Caco-2 (cell line): ENCODE measurements at regions of chr11 and their contacts with region 1.

Region 1: DNA sequence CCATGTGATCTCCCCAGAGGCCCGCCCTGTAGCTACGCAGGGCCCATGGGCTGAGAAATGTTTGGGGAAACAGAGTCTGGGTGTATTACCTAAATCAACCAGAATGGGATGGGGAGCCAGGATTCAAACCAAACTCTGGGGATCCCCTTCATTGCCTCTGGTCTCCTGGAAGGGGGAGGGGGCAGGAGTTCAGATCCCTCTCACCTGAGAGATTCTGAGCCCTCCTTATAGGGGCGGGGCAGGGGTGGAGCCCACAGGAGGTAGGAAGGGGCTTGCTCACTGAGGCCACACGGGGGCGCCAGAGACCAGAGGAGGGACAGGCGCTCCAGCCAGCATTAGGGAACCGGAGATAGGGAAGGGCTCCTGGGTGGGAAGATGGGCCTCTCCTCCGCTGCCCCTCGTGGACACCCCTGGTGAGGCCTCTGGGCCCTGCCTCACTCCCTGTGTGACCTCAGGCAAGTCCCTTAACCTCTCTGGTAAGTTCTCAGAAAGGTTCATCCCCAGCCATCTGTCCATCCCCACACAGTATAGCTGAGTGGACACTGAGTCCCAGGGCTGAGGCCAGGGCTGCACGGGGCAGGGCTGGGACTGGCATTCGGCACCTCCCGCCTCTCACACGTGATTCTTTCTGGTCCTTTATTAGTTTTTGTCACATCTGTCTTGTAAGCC is 2.7 kb upstream of the CDC42BPG start:
- DNase-seq: peak; percentile 96 to 98
- H3K4me3 ChIP-seq: no peak overlapping the region
- H3K4me3 Mint-ChIP-seq: no peak overlapping the region
- H3K27ac Mint-ChIP-seq: no peak overlapping the region
- H3K4me1 ChIP-seq: peaks cover 34% of the 10 kb centered on the region
- H3K4me1 Mint-ChIP-seq: peaks cover 31% of the 10 kb centered on the region
- H3K27me3 ChIP-seq: no peaks in the 10 kb centered on the region
- H3K27me3 Mint-ChIP-seq: no peaks in the 10 kb centered on the region
- CTCF ChIP-seq: peak; percentile 95 to 99

Region 2: DNA sequence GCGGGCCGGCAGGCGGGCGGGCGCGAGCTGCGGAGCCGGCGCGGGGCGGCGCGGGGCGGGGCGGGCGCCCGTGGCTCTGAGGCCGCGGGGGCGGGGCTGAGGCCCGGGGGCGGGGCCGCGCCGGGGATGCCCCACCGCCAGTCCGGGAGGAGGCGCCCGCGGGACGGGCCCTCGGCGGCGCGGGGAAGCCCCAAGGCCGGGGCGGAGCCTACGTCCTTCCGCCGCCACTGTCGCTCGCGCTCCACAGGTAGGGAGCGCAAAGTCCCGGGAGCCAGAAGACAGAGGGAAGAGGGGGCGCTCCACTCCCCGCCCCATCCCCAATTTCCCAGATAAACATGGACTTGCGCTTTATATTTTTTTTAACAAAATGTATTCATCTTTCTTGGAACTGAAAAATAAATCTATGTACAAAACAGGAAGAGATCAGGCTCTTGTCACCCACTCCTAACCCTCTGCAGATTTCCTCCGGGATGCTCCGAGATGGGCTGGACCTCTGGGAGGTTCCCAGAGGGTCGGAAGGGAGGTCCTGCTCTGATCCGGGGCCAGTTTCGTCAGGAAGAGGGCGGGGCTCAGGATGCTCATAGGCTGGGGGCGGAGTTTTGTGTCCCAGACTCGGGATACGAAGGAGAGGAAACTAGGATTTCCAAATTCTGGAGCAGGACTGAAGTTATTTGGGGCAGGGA is 43.8 kb before region 1 on chr11 and contains the start of gene MAP4K2:
- CTCF ChIA-PET with region 1: interaction called, 3 read pairs
- POLR2A ChIA-PET with region 1: interaction called, 3 read pairs
- intact Hi-C with region 1: loop called (anchors 5 kb)
- DNase-seq: peak; percentile 92 to 96
- H3K4me3 ChIP-seq: peak within 1 kb of the TSS; percentile 75
- H3K4me3 Mint-ChIP-seq: peak within 1 kb of the TSS; percentile 87
- H3K27ac Mint-ChIP-seq: peak within 1 kb of the TSS; percentile 76
- H3K4me1 ChIP-seq: peaks cover 20% of the 10 kb centered on the region
- H3K4me1 Mint-ChIP-seq: peaks cover 9% of the 10 kb centered on the region
- H3K27me3 ChIP-seq: no peaks in the 10 kb centered on the region
- H3K27me3 Mint-ChIP-seq: no peaks in the 10 kb centered on the region
- CTCF ChIP-seq: peak; percentile 17 to 42
- total RNA-seq, gene MAP4K2: 16.8 and 21.4 TPM in 2 replicates

Region 3: GRCh38 chr11:64878494-64879243 is 31.5 kb after region 1 on chr11 and contains the start of gene EHD1:
- CTCF ChIA-PET with region 1: interaction called, 16 read pairs
- POLR2A ChIA-PET with region 1: interaction called, 4 read pairs
- intact Hi-C with region 1: loop called (anchors 1 kb)
- DNase-seq: peak; percentile 99
- H3K4me3 ChIP-seq: peak within 1 kb of the TSS; percentile 93
- H3K4me3 Mint-ChIP-seq: peak within 1 kb of the TSS; percentile 85
- H3K27ac Mint-ChIP-seq: peak within 1 kb of the TSS; percentile 82
- H3K4me1 ChIP-seq: peaks cover 26% of the 10 kb centered on the region
- H3K4me1 Mint-ChIP-seq: peaks cover 7% of the 10 kb centered on the region
- H3K27me3 ChIP-seq: no peaks in the 10 kb centered on the region
- H3K27me3 Mint-ChIP-seq: no peaks in the 10 kb centered on the region
- CTCF ChIP-seq: peak in 1 of 2 experiments; percentile 75
- total RNA-seq, gene EHD1: 123 and 129 TPM in 2 replicates

Region 4: GRCh38 chr11:64894070-64894796 is 47.1 kb after region 1 on chr11:
- CTCF ChIA-PET with region 1: interaction called, 51 read pairs
- POLR2A ChIA-PET with region 1: no interaction called
- intact Hi-C with region 1: loop called (anchors 1 kb)
- DNase-seq: peak; percentile 90 to 94
- H3K4me3 ChIP-seq: peak overlapping the region; percentile 78
- H3K4me3 Mint-ChIP-seq: peak overlapping the region; percentile 80
- H3K27ac Mint-ChIP-seq: peak overlapping the region; percentile 93
- H3K4me1 ChIP-seq: peaks cover 47% of the 10 kb centered on the region
- H3K4me1 Mint-ChIP-seq: peaks cover 22% of the 10 kb centered on the region
- H3K27me3 ChIP-seq: no peaks in the 10 kb centered on the region
- H3K27me3 Mint-ChIP-seq: no peaks in the 10 kb centered on the region
- CTCF ChIP-seq: peak; percentile 94 to 97

Region 5: GRCh38 chr11:64947208-64947814 is 100.2 kb after region 1 on chr11:
- CTCF ChIA-PET with region 1: no interaction called
- POLR2A ChIA-PET with region 1: no interaction called
- intact Hi-C with region 1: no loop called
- DNase-seq: peak in 1 of 2 experiments; percentile 22
- H3K4me3 ChIP-seq: no peak overlapping the region
- H3K4me3 Mint-ChIP-seq: no peak overlapping the region
- H3K27ac Mint-ChIP-seq: no peak overlapping the region
- H3K4me1 ChIP-seq: no peaks in the 10 kb centered on the region
- H3K4me1 Mint-ChIP-seq: no peaks in the 10 kb centered on the region
- H3K27me3 ChIP-seq: no peaks in the 10 kb centered on the region
- H3K27me3 Mint-ChIP-seq: peaks cover 18% of the 10 kb centered on the region
- CTCF ChIP-seq: peak in 1 of 2 experiments; percentile 12

Region 6: GRCh38 chr11:64996710-64997380 is 149.7 kb after region 1 on chr11 and contains the start of gene BATF2:
- CTCF ChIA-PET with region 1: interaction called, 5 read pairs
- POLR2A ChIA-PET with region 1: no interaction called
- intact Hi-C with region 1: loop called (anchors 5 kb)
- DNase-seq: peak; percentile 79 to 84
- H3K4me3 ChIP-seq: no peak within 1 kb of the TSS
- H3K4me3 Mint-ChIP-seq: peak within 1 kb of the TSS; percentile 56
- H3K27ac Mint-ChIP-seq: peak within 1 kb of the TSS; percentile 63
- H3K4me1 ChIP-seq: peaks cover 37% of the 10 kb centered on the region
- H3K4me1 Mint-ChIP-seq: peaks cover 26% of the 10 kb centered on the region
- H3K27me3 ChIP-seq: no peaks in the 10 kb centered on the region
- H3K27me3 Mint-ChIP-seq: no peaks in the 10 kb centered on the region
- CTCF ChIP-seq: peak; percentile 45 to 69
- total RNA-seq, gene BATF2: 0.79 and 1.4 TPM in 2 replicates

Region 7: GRCh38 chr11:65117216-65118096 is 270.3 kb after region 1 on chr11 and contains the start of gene ZNHIT2:
- CTCF ChIA-PET with region 1: interaction called, 3 read pairs
- POLR2A ChIA-PET with region 1: no interaction called
- intact Hi-C with region 1: loop called (anchors 1 kb)
- DNase-seq: peak; percentile 99
- H3K4me3 ChIP-seq: peak within 1 kb of the TSS; percentile 87
- H3K4me3 Mint-ChIP-seq: peak within 1 kb of the TSS; percentile 83
- H3K27ac Mint-ChIP-seq: peak within 1 kb of the TSS; percentile 92
- H3K4me1 ChIP-seq: peaks cover 25% of the 10 kb centered on the region
- H3K4me1 Mint-ChIP-seq: peaks cover 13% of the 10 kb centered on the region
- H3K27me3 ChIP-seq: no peaks in the 10 kb centered on the region
- H3K27me3 Mint-ChIP-seq: no peaks in the 10 kb centered on the region
- CTCF ChIP-seq: peak; percentile 93 to 94
- total RNA-seq, gene ZNHIT2: 12.2 and 14.7 TPM in 2 replicates

Region 8: DNA sequence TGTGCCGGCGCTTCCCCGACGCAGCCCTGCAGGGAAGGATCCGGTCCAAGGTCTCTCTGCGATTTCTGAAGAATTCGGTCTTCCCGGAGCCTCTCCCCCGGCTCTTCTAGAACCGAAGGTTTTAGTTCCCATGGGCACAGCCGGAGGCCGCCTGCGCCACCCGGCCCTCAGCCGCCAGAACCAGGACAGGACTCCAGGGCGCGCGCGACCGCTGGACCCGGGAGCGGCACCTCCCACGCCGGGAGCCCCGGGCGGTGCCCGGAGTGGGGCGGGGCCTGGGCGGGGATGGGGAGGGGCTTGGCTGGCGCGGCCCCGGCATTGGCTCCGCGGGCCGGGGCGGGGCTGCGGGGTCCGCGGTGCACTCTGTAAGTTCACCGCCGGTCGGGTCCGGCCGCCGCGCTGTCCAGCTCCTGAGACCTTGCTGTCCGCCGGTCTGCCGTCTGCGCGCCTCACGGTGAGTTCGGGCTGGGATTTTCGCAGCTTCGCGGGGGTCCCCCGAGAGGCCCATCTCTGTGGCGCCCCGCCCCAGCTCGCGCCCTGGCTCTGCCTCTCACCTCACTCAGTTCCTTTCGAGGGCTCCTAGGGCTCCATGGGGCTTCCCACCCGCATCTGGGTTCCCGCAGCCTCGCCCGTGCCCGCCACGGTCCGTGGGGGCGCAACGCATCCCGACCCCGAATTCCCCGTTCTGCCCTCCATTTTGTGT is 467.5 kb after region 1 on chr11 and contains the start of gene CDC42EP2:
- CTCF ChIA-PET with region 1: no interaction called
- POLR2A ChIA-PET with region 1: no interaction called
- intact Hi-C with region 1: no loop called
- DNase-seq: peak; percentile 87 to 94
- H3K4me3 ChIP-seq: peak within 1 kb of the TSS; percentile 99
- H3K4me3 Mint-ChIP-seq: peak within 1 kb of the TSS; percentile 81
- H3K27ac Mint-ChIP-seq: peak within 1 kb of the TSS; percentile 80
- H3K4me1 ChIP-seq: peaks cover 33% of the 10 kb centered on the region
- H3K4me1 Mint-ChIP-seq: peaks cover 28% of the 10 kb centered on the region
- H3K27me3 ChIP-seq: no peaks in the 10 kb centered on the region
- H3K27me3 Mint-ChIP-seq: no peaks in the 10 kb centered on the region
- CTCF ChIP-seq: peak in 1 of 2 experiments; percentile 10
- total RNA-seq, gene CDC42EP2: 38.0 and 40.7 TPM in 2 replicates